OCI-LY7 (cell line): ENCODE measurements at regions of chr3 and their contacts with region 1.

Region 1: GRCh38 chr3:143119009-143119914 is at the start of gene CHST2:
- DNase-seq: peak; percentile 84
- H3K4me3 ChIP-seq: peak within 1 kb of the TSS; percentile 72
- H3K27ac ChIP-seq: no peak within 1 kb of the TSS
- H3K4me1 ChIP-seq: peaks cover 22% of the 10 kb centered on the region
- CTCF ChIP-seq: no peak
- total RNA-seq, gene CHST2: 0.93 and 1.2 TPM in 2 replicates

Region 2: GRCh38 chr3:143081844-143082778 is 37.2 kb before region 1 on chr3:
- CTCF ChIA-PET with region 1: no interaction called
- POLR2A ChIA-PET with region 1: interaction called, 4 read pairs
- intact Hi-C with region 1: loop called (anchors 1 kb)
- DNase-seq: peak; percentile 37
- H3K4me3 ChIP-seq: no peak overlapping the region
- H3K27ac ChIP-seq: no peak overlapping the region
- H3K4me1 ChIP-seq: peaks cover 11% of the 10 kb centered on the region
- CTCF ChIP-seq: no peak

Region 3: GRCh38 chr3:143092191-143092590 is 27.1 kb before region 1 on chr3:
- CTCF ChIA-PET with region 1: no interaction called
- POLR2A ChIA-PET with region 1: no interaction called
- intact Hi-C with region 1: no loop called
- DNase-seq: no peak
- H3K4me3 ChIP-seq: no peak overlapping the region
- H3K27ac ChIP-seq: no peak overlapping the region
- H3K4me1 ChIP-seq: no peaks in the 10 kb centered on the region
- CTCF ChIP-seq: no peak

Region 4: DNA sequence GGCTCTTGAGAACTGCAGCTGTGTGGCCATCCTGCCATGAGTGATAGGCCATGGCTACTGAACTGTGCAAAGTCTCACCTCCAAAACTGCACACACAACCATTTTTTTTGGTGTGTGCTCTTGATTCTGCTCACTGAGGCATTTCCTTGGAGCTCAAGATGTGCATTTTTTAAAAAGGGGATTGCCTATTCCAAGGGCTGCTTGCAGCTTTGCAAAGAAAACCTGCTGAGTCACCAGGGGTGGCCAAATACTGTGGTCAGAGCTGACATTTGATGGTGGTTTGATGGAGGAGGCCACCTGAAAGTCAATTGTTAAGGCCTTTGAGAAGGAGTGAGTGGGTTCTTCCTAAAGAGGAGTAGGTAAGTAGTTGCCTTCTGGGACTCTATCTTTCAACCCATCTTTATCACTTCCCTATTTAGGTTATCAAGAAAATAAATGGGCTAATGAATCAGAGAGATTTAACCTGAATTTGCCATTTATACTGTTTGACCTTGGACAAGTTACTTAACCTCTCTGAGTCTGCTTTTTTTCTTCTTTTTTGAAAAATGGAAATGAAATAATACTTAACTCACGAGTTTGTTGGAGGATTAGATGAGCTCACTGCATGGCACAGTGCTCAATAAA is 88.2 kb after region 1 on chr3:
- CTCF ChIA-PET with region 1: no interaction called
- POLR2A ChIA-PET with region 1: no interaction called
- intact Hi-C with region 1: loop called (anchors 5 kb)
- DNase-seq: peak; percentile 92
- H3K4me3 ChIP-seq: peak overlapping the region; percentile 18
- H3K27ac ChIP-seq: peak overlapping the region; percentile 72
- H3K4me1 ChIP-seq: peaks cover 49% of the 10 kb centered on the region
- CTCF ChIP-seq: no peak

Region 5: GRCh38 chr3:143216709-143217182 is 97.5 kb after region 1 on chr3:
- CTCF ChIA-PET with region 1: no interaction called
- POLR2A ChIA-PET with region 1: no interaction called
- intact Hi-C with region 1: loop called (anchors 2 kb)
- DNase-seq: peak; percentile 24
- H3K4me3 ChIP-seq: peak overlapping the region; percentile 9
- H3K27ac ChIP-seq: no peak overlapping the region
- H3K4me1 ChIP-seq: peaks cover 54% of the 10 kb centered on the region
- CTCF ChIP-seq: no peak